Activated CD4-positive, alpha-beta T cell treated with anti-CD3 and anti-CD28 coated beads for 36 hours (primary cell): ENCODE measurements at regions of chr4 and their contacts with region 1.

Region 1: DNA sequence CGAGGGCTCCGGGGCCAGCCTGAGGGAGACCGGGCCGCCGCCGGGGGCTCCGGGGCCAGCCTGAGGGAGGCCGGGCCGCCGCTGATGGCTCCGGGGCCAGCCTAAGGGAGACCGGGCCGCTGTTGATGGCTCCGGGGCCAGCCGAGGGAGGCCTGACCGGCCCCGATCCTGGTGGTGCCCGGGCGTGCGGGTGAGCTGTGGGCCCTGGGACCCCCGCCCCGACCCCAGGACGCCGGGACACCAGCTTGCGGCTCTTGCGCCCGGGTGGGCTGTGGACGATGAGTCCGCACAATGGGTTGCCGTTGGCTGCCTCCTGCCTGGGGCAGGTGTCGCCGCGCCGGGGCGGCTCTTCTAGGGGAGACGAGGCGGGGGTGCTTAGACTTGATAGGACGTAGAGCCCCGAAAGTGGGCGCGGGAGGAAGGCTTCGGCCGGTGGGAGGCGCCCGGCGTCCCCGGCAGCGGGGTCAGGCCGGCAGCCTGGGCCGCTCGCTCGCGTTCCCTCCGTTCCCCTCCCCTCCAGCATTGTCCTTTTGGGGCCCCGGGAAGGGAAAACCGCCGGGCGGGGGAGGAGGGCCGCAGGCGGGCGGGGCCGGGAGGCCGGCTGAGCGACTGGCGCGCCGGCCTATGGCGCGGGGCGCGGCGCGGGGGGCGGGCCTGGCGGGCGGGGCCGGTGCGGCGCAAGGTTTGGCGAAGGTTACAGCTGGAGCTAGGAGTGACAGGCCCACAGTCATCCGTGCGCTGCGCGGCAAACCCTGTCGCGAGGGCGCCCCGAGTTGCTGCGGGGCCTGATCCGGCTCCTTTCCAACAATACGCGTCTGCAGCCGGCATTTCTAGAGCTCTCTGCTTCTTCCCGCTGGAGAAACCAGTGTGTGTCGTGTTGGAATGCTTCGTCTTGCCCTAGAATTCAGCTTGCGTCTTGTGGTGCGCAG is 790 bp downstream of the KIAA0232 start:
- DNase-seq: peak; percentile 94
- ATAC-seq: peak; percentile 82
- H3K4me3 Mint-ChIP-seq: peak overlapping the region; percentile 84
- H3K27ac Mint-ChIP-seq: peak overlapping the region; percentile 73
- H3K4me1 Mint-ChIP-seq: peaks cover 52% of the 10 kb centered on the region
- H3K27me3 Mint-ChIP-seq: no peaks in the 10 kb centered on the region

Region 2: DNA sequence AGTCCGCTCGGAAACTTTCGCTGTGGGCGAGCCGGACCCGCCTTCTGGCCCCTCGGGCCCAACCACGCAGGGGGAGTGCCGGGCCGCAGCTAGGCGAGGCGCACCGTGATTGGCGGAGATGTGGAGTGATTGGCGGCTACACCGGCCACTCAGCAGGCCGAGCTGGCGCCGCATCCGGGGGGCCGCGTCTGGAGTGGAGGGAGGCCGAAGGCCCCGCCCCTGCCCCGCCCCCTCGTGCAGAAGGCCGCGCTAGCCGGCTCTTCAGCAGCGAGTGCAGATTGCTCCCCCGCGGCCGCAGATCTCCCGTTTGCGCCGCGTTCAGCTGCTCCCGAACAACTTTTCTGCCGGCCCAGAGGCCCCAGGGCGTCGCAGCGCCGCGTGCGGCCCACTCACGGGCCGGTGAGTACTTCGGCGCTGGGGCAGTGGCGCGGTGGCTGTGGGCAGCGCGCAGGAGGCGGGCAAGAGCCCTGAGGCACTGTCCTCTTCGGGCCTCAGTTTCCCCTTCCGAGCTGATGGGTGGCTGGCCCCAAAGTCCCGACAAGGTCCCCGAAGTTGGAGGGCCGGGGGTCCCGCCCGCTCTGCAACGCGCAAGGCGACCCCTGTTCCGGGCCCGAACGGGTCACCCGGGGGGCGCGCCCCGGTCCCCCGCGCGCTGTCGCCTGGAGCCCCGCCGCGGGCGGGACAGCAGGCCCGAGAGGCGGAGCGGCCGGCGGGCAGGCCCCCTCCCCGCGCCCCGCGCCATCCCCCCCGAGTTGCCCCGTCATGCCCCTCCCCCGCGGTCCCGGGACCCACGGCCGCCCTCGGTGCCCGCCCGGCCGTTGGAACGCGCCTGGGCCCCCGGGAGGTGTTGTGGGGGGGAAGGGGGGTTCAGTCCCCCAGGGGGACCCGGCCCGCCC is 513.5 kb before region 1 on chr4 and contains the start of gene WFS1:
- CTCF ChIA-PET with region 1: no interaction called
- POLR2A ChIA-PET with region 1: no interaction called
- intact Hi-C with region 1: loop called in 1 of 2 experiments (anchors 1 kb)
- DNase-seq: peak; percentile 98
- ATAC-seq: peak; percentile 100
- H3K4me3 Mint-ChIP-seq: peak within 1 kb of the TSS; percentile 71
- H3K27ac Mint-ChIP-seq: no peak within 1 kb of the TSS
- H3K4me1 Mint-ChIP-seq: peaks cover 16% of the 10 kb centered on the region
- H3K27me3 Mint-ChIP-seq: peaks cover 7% of the 10 kb centered on the region
- total RNA-seq, gene WFS1: 3.4 to 4.8 TPM

Region 3: GRCh38 chr4:6673660-6674499 is 109.4 kb before region 1 on chr4:
- CTCF ChIA-PET with region 1: no interaction called
- POLR2A ChIA-PET with region 1: interaction called, 4 read pairs
- intact Hi-C with region 1: loop called (anchors 1 kb)
- DNase-seq: peak; percentile 96
- ATAC-seq: peak; percentile 77
- H3K4me3 Mint-ChIP-seq: peak overlapping the region; percentile 93
- H3K27ac Mint-ChIP-seq: peak overlapping the region; percentile 99
- H3K4me1 Mint-ChIP-seq: peaks cover 40% of the 10 kb centered on the region
- H3K27me3 Mint-ChIP-seq: no peaks in the 10 kb centered on the region

Region 4: GRCh38 chr4:6855692-6856297 is 72.5 kb after region 1 on chr4:
- CTCF ChIA-PET with region 1: interaction called, 3 read pairs
- POLR2A ChIA-PET with region 1: no interaction called
- intact Hi-C with region 1: loop called in 1 of 2 experiments (anchors 1 kb)
- DNase-seq: peak; percentile 48
- ATAC-seq: peak; percentile 95
- H3K4me3 Mint-ChIP-seq: peak overlapping the region; percentile 38
- H3K27ac Mint-ChIP-seq: peak overlapping the region; percentile 88
- H3K4me1 Mint-ChIP-seq: peaks cover 27% of the 10 kb centered on the region
- H3K27me3 Mint-ChIP-seq: no peaks in the 10 kb centered on the region

Region 5: GRCh38 chr4:6986781-6987587 is 203.7 kb after region 1 on chr4:
- CTCF ChIA-PET with region 1: no interaction called
- POLR2A ChIA-PET with region 1: no interaction called
- intact Hi-C with region 1: loop called (anchors 1 to 2 kb)
- DNase-seq: peak; percentile 97
- ATAC-seq: peak; percentile 93
- H3K4me3 Mint-ChIP-seq: peak overlapping the region; percentile 96
- H3K27ac Mint-ChIP-seq: peak overlapping the region; percentile 93
- H3K4me1 Mint-ChIP-seq: peaks cover 66% of the 10 kb centered on the region
- H3K27me3 Mint-ChIP-seq: no peaks in the 10 kb centered on the region

Region 6: DNA sequence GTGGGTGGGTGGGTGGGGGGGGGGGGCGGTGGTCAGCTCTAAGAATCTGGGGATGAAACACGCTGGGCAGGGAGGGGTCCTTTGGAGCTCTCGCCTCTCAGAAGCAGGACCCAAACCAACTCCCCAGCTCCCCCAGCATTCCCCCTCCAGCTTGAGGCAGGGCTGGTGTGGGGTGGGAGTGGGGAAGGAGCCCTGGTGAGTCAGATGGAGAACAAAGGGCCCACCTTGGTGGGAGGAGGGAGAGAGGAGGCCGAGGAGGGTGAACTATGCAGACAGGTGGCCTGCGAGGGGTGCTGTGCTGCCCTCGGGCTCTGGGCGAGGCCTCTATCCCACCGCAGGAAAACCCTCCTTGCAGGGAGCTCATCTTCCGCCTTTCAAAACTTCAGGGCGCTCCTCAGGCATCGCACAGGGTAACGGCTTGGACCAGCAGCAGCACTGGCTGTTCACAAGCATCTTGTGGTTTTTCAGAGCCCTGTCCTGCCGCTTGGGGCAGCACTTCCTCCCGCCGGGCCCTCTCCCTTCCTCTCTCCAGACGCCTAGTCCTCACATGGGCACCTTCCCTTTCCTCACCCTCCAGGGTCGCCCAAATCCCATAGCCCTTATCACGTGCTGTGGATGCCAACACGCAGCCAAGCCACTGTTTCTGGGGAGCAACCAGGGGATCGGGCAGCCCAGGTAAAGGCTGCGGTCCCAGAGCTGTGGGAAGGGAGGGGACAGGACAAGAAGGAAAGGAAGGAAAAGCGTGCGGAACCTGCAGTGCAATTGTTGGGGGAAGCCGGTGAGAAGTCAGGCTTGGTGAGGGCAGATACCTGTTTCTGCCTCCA is 318.6 kb after region 1 on chr4:
- CTCF ChIA-PET with region 1: no interaction called
- POLR2A ChIA-PET with region 1: no interaction called
- intact Hi-C with region 1: loop called in 1 of 2 experiments (anchors 2 kb)
- DNase-seq: peak; percentile 78
- ATAC-seq: peak; percentile 74
- H3K4me3 Mint-ChIP-seq: peak overlapping the region; percentile 84
- H3K27ac Mint-ChIP-seq: no peak overlapping the region
- H3K4me1 Mint-ChIP-seq: peaks cover 8% of the 10 kb centered on the region
- H3K27me3 Mint-ChIP-seq: no peaks in the 10 kb centered on the region